K562 (cell line): ENCODE measurements at regions of chr6 and their contacts with region 1.

Region 1: GRCh38 chr6:27893059-27893835 is 18.9 kb downstream of the OR2B2 start:
- DNase-seq: peak; percentile 84 to 99 (median 92)
- ATAC-seq: peak; percentile 71
- H3K4me3 ChIP-seq: peak overlapping the region; percentile 79
- H3K27ac ChIP-seq: peak overlapping the region; percentile 95
- H3K4me1 ChIP-seq: peaks cover 19 to 38% of the 10 kb centered on the region in 2 experiments
- H3K27me3 ChIP-seq: no peaks in the 10 kb centered on the region
- CTCF ChIP-seq: peak in 1 of 3 experiments; percentile 14; a peak in 1 of 6 replicates
- EP300 ChIP-seq: peak; percentile 62; the same call in 1 of the 2 replicates
- POLR2A ChIP-seq: peak; percentile 100
- RAD21 ChIP-seq: no peak

Region 2: GRCh38 chr6:27138837-27139755 is 754.2 kb before region 1 on chr6:
- CTCF ChIA-PET with region 1: no interaction called
- POLR2A ChIA-PET with region 1: interaction called, 134 read pairs
- in situ Hi-C with region 1: no loop called
- intact Hi-C with region 1: no loop called
- DNase-seq: peak; percentile 48 to 95 (median 65)
- ATAC-seq: peak; percentile 48
- H3K4me3 ChIP-seq: peak overlapping the region; percentile 48
- H3K27ac ChIP-seq: peak overlapping the region; percentile 88
- H3K4me1 ChIP-seq: peaks cover 7 to 17% of the 10 kb centered on the region in 2 experiments
- H3K27me3 ChIP-seq: no peaks in the 10 kb centered on the region
- CTCF ChIP-seq: no peak; a peak in 1 of 6 replicates
- EP300 ChIP-seq: peak; percentile 91
- POLR2A ChIP-seq: peak; percentile 98
- RAD21 ChIP-seq: peak in 1 of 2 experiments; percentile 16; a peak in 2 of 4 replicates

Region 3: DNA sequence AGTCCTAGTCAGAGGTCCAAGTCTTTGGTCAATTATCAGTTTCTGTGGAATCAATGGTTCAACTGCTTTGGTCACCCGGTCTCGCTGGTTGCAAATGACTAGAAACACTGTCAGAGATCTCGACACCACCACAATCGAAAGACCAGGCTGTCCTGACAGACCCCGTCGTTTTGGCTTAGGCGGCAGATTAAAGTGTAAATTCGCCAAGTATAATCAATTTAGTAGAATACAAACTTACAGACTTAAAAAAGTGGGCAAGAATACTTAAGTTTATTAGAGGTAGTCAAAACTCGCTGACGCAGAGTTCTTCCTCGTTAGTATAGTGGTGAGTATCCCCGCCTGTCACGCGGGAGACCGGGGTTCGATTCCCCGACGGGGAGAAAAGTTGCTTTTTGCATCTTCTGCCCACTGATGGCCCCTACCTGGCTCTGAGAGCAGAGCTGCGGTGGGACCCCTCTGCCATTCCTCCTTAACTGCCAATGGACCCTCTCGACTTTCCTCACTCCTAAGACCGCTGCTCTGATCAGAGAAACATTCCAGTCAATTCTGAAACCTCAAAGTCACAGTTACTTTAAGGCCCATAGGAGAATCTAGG is 389.7 kb before region 1 on chr6:
- CTCF ChIA-PET with region 1: no interaction called
- POLR2A ChIA-PET with region 1: interaction called, 5 read pairs
- in situ Hi-C with region 1: no loop called
- intact Hi-C with region 1: loop called (anchors 10 kb)
- DNase-seq: peak; percentile 58 to 92 (median 72)
- ATAC-seq: peak; percentile 63
- H3K4me3 ChIP-seq: peak overlapping the region; percentile 55
- H3K27ac ChIP-seq: peak overlapping the region; percentile 87
- H3K4me1 ChIP-seq: peaks cover 8 to 29% of the 10 kb centered on the region in 2 experiments
- H3K27me3 ChIP-seq: no peaks in the 10 kb centered on the region
- CTCF ChIP-seq: 0 out of 6 replicates have a peak, but pooled peaks of 1 of the 3 experiments have one; percentile 1
- EP300 ChIP-seq: no peak; the same call in 1 of the 2 replicates
- POLR2A ChIP-seq: no peak
- RAD21 ChIP-seq: peak in 1 of 2 experiments; percentile 3; a peak in 1 of 4 replicates

Region 4: DNA sequence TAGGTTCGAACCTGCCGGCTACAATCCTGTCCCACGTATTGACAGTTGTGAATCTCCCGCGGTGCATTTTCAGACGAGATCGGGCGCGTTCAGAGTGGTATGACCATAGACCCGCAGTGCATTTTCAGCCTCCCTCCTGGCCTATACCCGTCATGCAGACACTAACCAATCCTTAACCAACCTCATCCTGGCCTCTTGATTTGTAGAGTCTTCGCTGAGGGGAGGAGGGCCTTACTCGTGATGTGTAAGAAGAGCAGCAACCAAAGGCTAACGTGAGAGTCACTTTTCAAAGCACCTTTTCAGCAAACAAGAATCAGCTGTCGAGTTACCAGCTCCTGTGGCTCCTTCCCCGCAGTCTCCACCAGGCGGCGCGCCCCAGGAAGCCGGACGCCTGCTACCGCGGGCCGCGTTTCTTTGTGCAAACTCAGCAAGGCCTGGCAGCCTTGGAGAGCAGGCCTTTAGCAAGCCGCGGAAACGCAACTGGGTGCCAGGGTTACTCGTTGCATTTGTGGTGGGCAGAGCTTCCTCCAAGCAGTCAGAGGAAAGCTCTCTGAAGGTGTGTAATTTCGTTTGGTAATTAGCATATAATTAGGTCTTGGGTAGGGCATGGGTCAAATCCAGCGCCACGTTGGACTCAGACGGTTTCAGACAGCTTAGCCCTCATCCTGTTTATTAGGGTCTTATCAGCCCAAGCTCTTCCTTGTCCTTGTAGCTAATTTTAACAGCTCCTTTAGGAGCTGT is 120.8 kb before region 1 on chr6:
- CTCF ChIA-PET with region 1: interaction called, 5 read pairs
- POLR2A ChIA-PET with region 1: interaction called, 27 read pairs
- in situ Hi-C with region 1: no loop called
- intact Hi-C with region 1: no loop called
- DNase-seq: peak; percentile 83 to 95 (median 84)
- ATAC-seq: peak; percentile 92
- H3K4me3 ChIP-seq: no peak overlapping the region
- H3K27ac ChIP-seq: peak overlapping the region; percentile 75
- H3K4me1 ChIP-seq: peaks cover 22 to 40% of the 10 kb centered on the region in 2 experiments
- H3K27me3 ChIP-seq: no peaks in the 10 kb centered on the region
- CTCF ChIP-seq: peak; percentile 97 to 99 (median 97)
- EP300 ChIP-seq: peak; percentile 35
- POLR2A ChIP-seq: no peak
- RAD21 ChIP-seq: peak; percentile 94 to 97

Region 5: GRCh38 chr6:27838058-27838944 is 54.9 kb before region 1 on chr6:
- CTCF ChIA-PET with region 1: no interaction called
- POLR2A ChIA-PET with region 1: interaction called, 826 read pairs
- in situ Hi-C with region 1: loop called (anchors 5 kb)
- intact Hi-C with region 1: loop called (anchors 1 kb)
- DNase-seq: peak; percentile 85 to 99 (median 92)
- ATAC-seq: peak; percentile 74
- H3K4me3 ChIP-seq: peak overlapping the region; percentile 56
- H3K27ac ChIP-seq: peak overlapping the region; percentile 88
- H3K4me1 ChIP-seq: peaks cover 12 to 13% of the 10 kb centered on the region in 2 experiments; a peak in 3 of 5 replicates
- H3K27me3 ChIP-seq: no peaks in the 10 kb centered on the region
- CTCF ChIP-seq: peak in 1 of 3 experiments; percentile 9; a peak in 1 of 6 replicates
- EP300 ChIP-seq: peak; percentile 35
- POLR2A ChIP-seq: peak; percentile 99
- RAD21 ChIP-seq: peak in 1 of 2 experiments; percentile 4; a peak in 1 of 4 replicates

Region 6: GRCh38 chr6:27871924-27872638 is 21.2 kb before region 1 on chr6:
- CTCF ChIA-PET with region 1: no interaction called
- POLR2A ChIA-PET with region 1: interaction called, 306 read pairs
- in situ Hi-C with region 1: no loop called
- intact Hi-C with region 1: no loop called
- DNase-seq: no peak
- ATAC-seq: no peak
- H3K4me3 ChIP-seq: no peak overlapping the region
- H3K27ac ChIP-seq: no peak overlapping the region
- H3K4me1 ChIP-seq: peaks cover 0 to 15% of the 10 kb centered on the region in 2 experiments; a peak in 4 of 5 replicates
- H3K27me3 ChIP-seq: no peaks in the 10 kb centered on the region
- CTCF ChIP-seq: no peak
- EP300 ChIP-seq: no peak
- POLR2A ChIP-seq: no peak
- RAD21 ChIP-seq: no peak

Region 7: DNA sequence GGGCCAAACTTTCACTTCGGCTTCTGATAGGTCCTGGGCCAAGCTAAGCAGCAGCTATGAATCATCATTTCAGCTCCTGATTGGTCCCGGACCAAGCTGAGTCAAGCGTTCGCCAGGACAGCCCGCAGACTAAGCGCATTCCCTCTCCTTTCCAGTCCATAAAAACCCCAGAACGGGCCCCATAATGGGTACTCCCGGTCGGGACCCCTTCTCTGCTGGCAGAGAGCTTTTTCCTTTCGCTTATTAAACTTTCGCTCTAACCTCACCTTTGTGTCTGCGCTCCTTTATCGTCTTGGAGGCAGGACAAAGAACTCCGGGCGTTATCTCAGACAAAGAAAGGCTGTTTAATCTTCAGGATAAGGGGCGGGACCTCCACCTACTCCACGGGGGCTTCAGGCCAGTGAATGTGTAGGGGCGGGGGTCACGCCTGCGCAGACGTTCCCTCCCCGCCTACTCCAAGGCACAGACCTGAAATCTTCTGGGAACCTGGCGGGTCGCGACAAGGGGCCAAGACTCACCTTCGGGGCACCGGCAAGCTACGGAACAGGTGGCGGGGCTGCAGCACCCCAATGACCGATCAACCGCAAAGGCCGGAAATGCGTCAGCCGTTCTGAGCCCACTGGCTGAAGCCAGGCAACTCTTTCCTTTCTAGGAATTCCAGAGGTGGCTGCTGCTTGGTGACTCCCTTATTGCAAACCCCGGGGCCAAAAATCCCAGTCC is 442.5 kb after region 1 on chr6 and contains the start of gene ZSCAN31:
- CTCF ChIA-PET with region 1: no interaction called
- POLR2A ChIA-PET with region 1: interaction called, 19 read pairs
- in situ Hi-C with region 1: no loop called
- intact Hi-C with region 1: no loop called
- DNase-seq: peak; percentile 97 to 99 (median 97)
- ATAC-seq: peak; percentile 91
- H3K4me3 ChIP-seq: peak within 1 kb of the TSS; percentile 69
- H3K27ac ChIP-seq: peak within 1 kb of the TSS; percentile 98
- H3K4me1 ChIP-seq: peaks cover 23 to 43% of the 10 kb centered on the region in 2 experiments
- H3K27me3 ChIP-seq: no peaks in the 10 kb centered on the region
- CTCF ChIP-seq: no peak
- EP300 ChIP-seq: peak; percentile 8; the same call in 1 of the 2 replicates
- POLR2A ChIP-seq: peak; percentile 99
- RAD21 ChIP-seq: peak in 1 of 2 experiments; percentile 17; a peak in 1 of 4 replicates
- polyA plus RNA-seq, gene ZSCAN31: 5.0 to 7.0 TPM